ENCODE measurements at regions of chr1 and their contacts with region 1.

Region 1: GRCh38 chr1:88237058-88237457 is 447.0 kb upstream of the PKN2 start:
- DNase-seq: peak in 2 of 10 donors; percentile 46 to 53
- H3K4me3 ChIP-seq: no peak overlapping the region
- H3K27ac ChIP-seq: peak overlapping the region in 39 of 59 donors; percentile 2 to 79 (median 54)
- H3K27me3 ChIP-seq: no peaks in the 10 kb centered on the region
- CTCF ChIP-seq: no peak

Region 2: GRCh38 chr1:88291611-88292354 is 54.7 kb after region 1 on chr1:
- intact Hi-C with region 1: loop called in 1 of 2 experiments (anchors 10 kb)
- DNase-seq: no peak
- H3K4me3 ChIP-seq: no peak overlapping the region
- H3K27ac ChIP-seq: peak overlapping the region in 49 of 59 donors; percentile 5 to 85 (median 65)
- H3K27me3 ChIP-seq: no peaks in the 10 kb centered on the region
- CTCF ChIP-seq: no peak

Region 3: GRCh38 chr1:88371396-88371795 is 134.3 kb after region 1 on chr1:
- intact Hi-C with region 1: no loop called
- DNase-seq: no peak
- H3K4me3 ChIP-seq: no peak overlapping the region
- H3K27ac ChIP-seq: no peak overlapping the region
- H3K27me3 ChIP-seq: no peaks in the 10 kb centered on the region
- CTCF ChIP-seq: no peak